CD4-positive, alpha-beta memory T cell (primary cell): ENCODE measurements at regions of chr16 and their contacts with region 1.

Region 1: DNA sequence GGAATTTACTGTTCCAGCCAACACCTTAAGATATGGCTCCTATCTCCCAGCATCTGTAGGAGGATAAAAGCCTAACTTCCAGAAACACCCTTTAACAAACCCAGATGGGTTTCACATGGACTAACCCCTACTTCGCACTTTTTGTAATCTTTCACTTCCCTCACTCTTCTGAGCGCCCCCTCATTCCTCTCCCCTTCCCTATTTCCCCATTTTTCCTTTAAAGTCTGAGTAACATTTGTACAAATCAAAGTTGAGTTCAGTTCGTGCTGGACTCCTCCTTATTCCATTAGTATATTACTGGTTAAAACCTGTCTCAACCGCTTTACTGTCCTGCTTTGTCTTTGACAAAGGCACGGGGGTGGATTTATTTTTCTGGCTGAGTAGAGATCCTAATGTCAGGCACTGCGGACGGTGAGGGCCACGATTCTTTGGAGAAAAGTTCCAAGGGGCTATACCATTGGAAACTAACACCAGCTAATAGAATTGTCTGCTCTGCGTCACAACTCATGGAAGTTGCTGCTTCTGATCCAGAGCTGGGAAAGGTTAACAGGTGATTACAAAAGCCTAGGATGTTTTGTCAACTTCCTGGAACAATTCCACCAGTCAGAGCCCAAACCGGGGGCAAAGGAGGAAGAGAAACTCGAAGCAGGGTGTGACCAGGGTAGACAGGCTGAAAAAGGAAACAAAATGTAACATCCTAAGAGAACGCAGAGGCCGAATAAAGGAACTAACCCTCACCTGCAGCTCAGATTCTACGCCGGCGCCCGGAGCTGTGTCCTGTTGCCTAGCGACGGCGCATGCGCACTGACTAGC is 12.5 kb downstream of the TAT start:
- DNase-seq: no peak
- H3K4me3 ChIP-seq: peak overlapping the region; percentile 7 to 61
- H3K4me3 Mint-ChIP-seq: peak overlapping the region; percentile 89 to 96 (median 93)
- H3K27ac ChIP-seq: peak overlapping the region; percentile 69
- H3K27ac Mint-ChIP-seq: peak overlapping the region; percentile 90 to 99 (median 96)
- H3K4me1 ChIP-seq: peaks cover 12% of the 10 kb centered on the region
- H3K4me1 Mint-ChIP-seq: peaks cover 11 to 21% (median 17%) of the 10 kb centered on the region in 4 donors
- H3K27me3 ChIP-seq: no peaks in the 10 kb centered on the region
- H3K27me3 Mint-ChIP-seq: no peaks in the 10 kb centered on the region

Region 2: GRCh38 chr16:70800781-70801530 is 763.4 kb before region 1 on chr16 and contains the start of gene VAC14:
- CTCF ChIA-PET with region 1: no interaction called
- POLR2A ChIA-PET with region 1: no interaction called
- intact Hi-C with region 1: loop called (anchors 10 kb)
- DNase-seq: peak; percentile 96 to 97 (median 97)
- H3K4me3 ChIP-seq: peak within 1 kb of the TSS; percentile 31 to 67
- H3K4me3 Mint-ChIP-seq: peak within 1 kb of the TSS; percentile 93 to 98 (median 96)
- H3K27ac ChIP-seq: peak within 1 kb of the TSS; percentile 61
- H3K27ac Mint-ChIP-seq: peak within 1 kb of the TSS; percentile 92 to 96 (median 94)
- H3K4me1 ChIP-seq: peaks cover 27% of the 10 kb centered on the region
- H3K4me1 Mint-ChIP-seq: peaks cover 18 to 47% (median 31%) of the 10 kb centered on the region in 4 donors
- H3K27me3 ChIP-seq: no peaks in the 10 kb centered on the region
- H3K27me3 Mint-ChIP-seq: no peaks in the 10 kb centered on the region
- total RNA-seq, gene VAC14: 37.8 to 40.6 TPM

Region 3: DNA sequence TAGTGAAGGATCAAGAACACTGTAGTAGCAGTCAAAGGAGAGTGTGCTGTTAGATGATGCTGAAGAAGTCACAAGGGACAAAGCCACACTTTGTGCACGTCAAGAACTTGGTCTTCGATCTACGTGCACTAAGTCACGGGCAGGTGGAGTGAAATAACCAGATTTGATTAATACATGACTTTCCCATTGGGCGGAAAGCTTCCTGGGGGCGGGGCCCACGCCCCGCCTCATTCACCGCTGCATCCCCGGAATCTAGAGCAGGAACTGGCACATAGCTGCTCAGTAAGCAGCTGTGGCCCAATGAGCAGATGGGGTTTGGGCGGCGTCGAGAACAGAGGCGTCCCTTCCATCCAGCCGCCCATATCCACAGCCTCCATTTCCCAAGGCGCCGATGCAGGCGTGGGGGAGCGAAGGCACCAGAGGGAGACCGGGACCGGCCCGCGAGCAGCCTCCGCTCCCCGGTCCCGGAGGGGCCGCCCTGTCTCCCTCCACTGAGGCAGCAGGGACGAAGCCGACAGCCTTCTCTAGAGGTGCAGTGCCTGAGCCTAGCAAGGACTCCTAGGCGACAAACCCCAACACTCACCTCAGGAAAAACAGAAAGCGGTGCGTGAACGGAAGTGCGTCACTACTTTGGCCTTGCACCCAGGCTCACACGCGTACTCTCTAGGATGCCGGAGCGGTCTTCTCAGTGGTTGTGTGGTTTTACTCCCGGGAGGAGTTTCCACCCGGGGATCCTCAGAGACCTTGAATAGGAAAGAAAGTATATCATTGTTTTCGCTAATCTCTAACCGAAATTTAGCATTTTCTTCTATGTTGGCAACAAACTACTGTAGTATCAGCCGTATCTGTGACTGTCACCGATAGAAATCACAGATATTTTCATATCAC is 80.1 kb before region 1 on chr16:
- CTCF ChIA-PET with region 1: no interaction called
- POLR2A ChIA-PET with region 1: interaction called, 5 read pairs
- intact Hi-C with region 1: loop called (anchors 1 kb)
- DNase-seq: peak; percentile 84 to 92 (median 87)
- H3K4me3 ChIP-seq: peak overlapping the region; percentile 87 to 98
- H3K4me3 Mint-ChIP-seq: peak overlapping the region; percentile 82 to 92 (median 88)
- H3K27ac ChIP-seq: peak overlapping the region; percentile 87
- H3K27ac Mint-ChIP-seq: peak overlapping the region; percentile 81 to 98 (median 97)
- H3K4me1 ChIP-seq: peaks cover 10% of the 10 kb centered on the region
- H3K4me1 Mint-ChIP-seq: peaks cover 14 to 18% (median 17%) of the 10 kb centered on the region in 4 donors
- H3K27me3 ChIP-seq: no peaks in the 10 kb centered on the region
- H3K27me3 Mint-ChIP-seq: peaks cover 0 to 3% of the 10 kb centered on the region in 2 donors

Region 4: DNA sequence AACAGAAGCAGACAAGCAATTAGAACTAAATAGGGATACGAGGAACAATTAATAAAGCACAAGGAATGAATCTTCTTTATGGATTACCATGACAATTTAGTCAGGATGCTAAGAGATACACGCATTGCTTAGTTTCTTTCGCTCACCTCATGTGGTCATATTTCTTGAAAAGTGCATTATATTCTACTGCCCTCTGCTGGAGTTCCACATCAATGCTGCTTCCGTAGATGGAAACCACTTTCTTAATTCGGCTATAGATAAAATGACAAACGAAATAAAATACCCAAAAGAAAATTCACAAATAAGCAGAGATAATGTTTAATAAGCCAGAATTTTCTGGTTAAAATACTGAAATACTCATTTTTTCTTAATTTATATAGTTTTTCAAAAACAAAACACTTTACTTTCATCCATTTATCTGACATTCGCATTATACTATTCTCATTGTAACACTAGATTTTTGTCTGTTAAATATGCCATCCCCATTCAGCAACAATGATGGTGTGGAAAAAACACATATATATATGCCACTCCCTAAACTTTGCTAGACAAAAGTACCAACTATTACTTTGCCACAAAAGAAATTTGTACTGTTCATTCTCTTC is 182.2 kb after region 1 on chr16:
- CTCF ChIA-PET with region 1: interaction called, 3 read pairs
- POLR2A ChIA-PET with region 1: no interaction called
- intact Hi-C with region 1: loop called (anchors 1 kb)
- DNase-seq: peak; percentile 36 to 50 (median 40)
- H3K4me3 ChIP-seq: no peak overlapping the region
- H3K4me3 Mint-ChIP-seq: no peak overlapping the region
- H3K27ac ChIP-seq: no peak overlapping the region
- H3K27ac Mint-ChIP-seq: peak overlapping the region in 3 of 7 donors; percentile 1 to 44 (median 15)
- H3K4me1 ChIP-seq: no peaks in the 10 kb centered on the region
- H3K4me1 Mint-ChIP-seq: peaks cover 0 to 6% (median 2%) of the 10 kb centered on the region in 4 donors
- H3K27me3 ChIP-seq: no peaks in the 10 kb centered on the region
- H3K27me3 Mint-ChIP-seq: no peaks in the 10 kb centered on the region

Region 5: DNA sequence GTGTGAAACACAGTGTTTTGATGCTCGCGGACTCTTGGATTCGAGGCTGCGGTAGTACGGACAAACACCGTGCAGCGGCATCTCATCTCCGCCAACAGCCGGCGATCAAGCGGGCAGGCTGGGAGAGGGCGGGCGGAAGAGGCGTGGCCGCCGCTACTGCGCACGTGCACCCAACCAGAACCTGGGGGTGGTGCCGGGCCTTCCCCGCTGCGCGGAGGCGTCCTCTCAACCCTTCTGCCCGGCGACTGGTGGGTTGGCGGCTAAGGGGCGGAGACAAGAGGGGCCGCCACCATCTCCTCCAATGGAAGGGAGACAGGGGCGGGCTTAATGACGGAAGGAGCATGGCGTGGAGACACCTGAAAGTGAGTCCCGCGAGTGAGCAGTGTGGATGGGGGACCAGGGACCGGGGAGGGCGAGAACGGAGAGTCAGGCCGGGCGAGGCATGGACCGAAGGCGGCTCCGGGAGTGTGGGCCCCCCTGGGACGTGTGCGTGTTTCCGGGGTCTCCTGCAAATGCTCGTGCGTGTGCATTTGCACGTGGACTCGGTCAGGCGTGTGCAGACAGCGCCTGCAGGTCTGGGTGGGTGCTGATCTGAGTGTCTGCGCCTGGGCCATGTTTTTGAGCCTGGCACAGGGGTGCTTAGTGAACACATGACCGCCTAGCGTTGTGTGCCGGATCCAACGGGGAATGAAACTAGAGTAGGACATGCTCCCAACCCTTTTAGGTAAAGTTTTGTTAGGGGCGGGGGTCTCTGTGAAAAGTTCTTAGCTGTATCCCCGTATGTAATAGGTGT is 444.3 kb after region 1 on chr16 and contains the start of gene DHODH:
- CTCF ChIA-PET with region 1: no interaction called
- POLR2A ChIA-PET with region 1: no interaction called
- intact Hi-C with region 1: loop called (anchors 1 kb)
- DNase-seq: peak; percentile 98
- H3K4me3 ChIP-seq: peak within 1 kb of the TSS; percentile 91 to 95
- H3K4me3 Mint-ChIP-seq: peak within 1 kb of the TSS; percentile 94 to 100 (median 96)
- H3K27ac ChIP-seq: peak within 1 kb of the TSS; percentile 44
- H3K27ac Mint-ChIP-seq: peak within 1 kb of the TSS; percentile 51 to 96 (median 94)
- H3K4me1 ChIP-seq: no peaks in the 10 kb centered on the region
- H3K4me1 Mint-ChIP-seq: peaks cover 5 to 24% (median 10%) of the 10 kb centered on the region in 4 donors
- H3K27me3 ChIP-seq: no peaks in the 10 kb centered on the region
- H3K27me3 Mint-ChIP-seq: peaks cover 0 to under 1% of the 10 kb centered on the region in 2 donors
- total RNA-seq, gene DHODH: 9.6 to 9.7 TPM